Transverse colon (tissue), 4 donors: ENCODE measurements at regions of chr7 and their contacts with region 1.

Region 1: DNA sequence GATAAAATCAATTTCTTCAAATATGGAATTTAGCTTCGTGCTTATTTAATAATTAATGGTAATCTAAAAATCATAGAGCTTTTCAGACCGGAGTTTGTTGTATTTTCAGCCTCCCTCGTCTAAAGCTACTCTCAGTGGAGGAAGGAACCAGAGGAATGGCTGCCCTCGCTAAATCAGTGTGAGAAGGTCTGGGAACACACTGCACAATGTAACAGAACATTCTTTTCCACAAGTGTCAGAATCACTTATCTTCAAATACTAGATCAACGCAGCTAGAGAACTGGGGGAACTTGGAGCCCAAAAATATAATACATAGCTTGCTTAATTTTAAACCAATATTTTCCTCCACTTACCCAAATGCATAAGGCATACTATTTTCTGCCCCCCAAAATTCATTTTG is 148.5 kb downstream of the MTERF1 start:
- DNase-seq: no peak
- H3K4me3 ChIP-seq: no peak overlapping the region
- H3K27ac ChIP-seq: no peak overlapping the region
- H3K4me1 ChIP-seq: no peaks in the 10 kb centered on the region
- H3K27me3 ChIP-seq: no peaks in the 10 kb centered on the region
- CTCF ChIP-seq: no peak
- EP300 ChIP-seq: no peak
- POLR2A ChIP-seq: no peak

Region 2: GRCh38 chr7:91710881-91711280 is 21.1 kb before region 1 on chr7:
- in situ Hi-C with region 1: no loop called
- intact Hi-C with region 1: loop called (anchors 1 kb)
- DNase-seq: no peak
- H3K4me3 ChIP-seq: no peak overlapping the region
- H3K27ac ChIP-seq: no peak overlapping the region
- H3K4me1 ChIP-seq: no peaks in the 10 kb centered on the region
- H3K27me3 ChIP-seq: no peaks in the 10 kb centered on the region
- CTCF ChIP-seq: no peak
- EP300 ChIP-seq: no peak
- POLR2A ChIP-seq: no peak